MCF 10A (cell line): ENCODE measurements at regions of chr3 and their contacts with region 1.

Region 1: DNA sequence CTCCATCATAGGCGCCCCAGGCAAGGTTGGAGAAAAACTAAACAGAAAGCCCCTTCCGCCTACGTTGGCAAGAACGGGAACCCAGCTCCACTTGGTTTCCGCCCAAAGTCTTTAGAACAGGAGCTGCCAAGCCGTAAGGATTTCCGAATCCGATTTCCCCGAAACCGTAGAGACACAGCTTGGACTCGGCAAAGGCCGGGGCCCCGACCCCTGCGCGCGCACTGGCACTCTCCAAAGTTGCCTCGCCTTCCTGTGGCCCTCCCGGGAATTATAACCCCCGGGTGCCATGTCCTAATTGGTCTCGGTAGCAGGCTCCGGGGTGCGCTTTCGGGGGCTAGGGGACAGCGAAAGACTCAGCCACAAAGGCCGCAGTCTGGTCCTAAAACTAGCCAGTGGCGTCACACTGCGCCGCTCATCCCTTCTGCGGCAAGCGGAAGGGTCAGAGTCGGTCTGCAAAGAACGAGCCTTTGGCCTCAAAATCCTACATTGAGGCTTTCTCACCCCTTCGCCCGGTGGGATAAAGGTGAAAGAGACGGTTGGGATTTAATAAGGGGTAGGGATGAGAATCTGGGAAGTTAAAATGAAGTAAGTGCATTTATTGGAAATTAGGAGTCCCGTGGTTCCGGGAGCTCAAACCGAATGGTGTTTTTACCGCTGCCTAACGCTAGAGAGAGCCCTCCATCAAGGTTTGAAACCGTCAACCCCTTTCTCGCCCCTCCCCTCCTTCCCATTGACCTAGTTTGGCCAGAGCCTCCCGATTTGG is 6.8 kb downstream of the BCL6 start:
- DNase-seq: peak; percentile 95
- H3K4me3 Mint-ChIP-seq: peak overlapping the region; percentile 98
- H3K27ac Mint-ChIP-seq: peak overlapping the region; percentile 100
- H3K4me1 Mint-ChIP-seq: peaks cover 44% of the 10 kb centered on the region
- H3K27me3 Mint-ChIP-seq: no peaks in the 10 kb centered on the region
- CTCF ChIP-seq: peak; percentile 63

Region 2: GRCh38 chr3:187689984-187690383 is 48.5 kb before region 1 on chr3:
- CTCF ChIA-PET with region 1: no interaction called
- POLR2A ChIA-PET with region 1: no interaction called
- intact Hi-C with region 1: no loop called
- DNase-seq: no peak
- H3K4me3 Mint-ChIP-seq: no peak overlapping the region
- H3K27ac Mint-ChIP-seq: no peak overlapping the region
- H3K4me1 Mint-ChIP-seq: no peaks in the 10 kb centered on the region
- H3K27me3 Mint-ChIP-seq: peaks cover 47% of the 10 kb centered on the region
- CTCF ChIP-seq: no peak

Region 3: GRCh38 chr3:188262913-188263683 is 524.6 kb after region 1 on chr3:
- CTCF ChIA-PET with region 1: interaction called, 9 read pairs
- POLR2A ChIA-PET with region 1: interaction called, 29 read pairs
- intact Hi-C with region 1: no loop called
- DNase-seq: peak; percentile 62
- H3K4me3 Mint-ChIP-seq: no peak overlapping the region
- H3K27ac Mint-ChIP-seq: peak overlapping the region; percentile 43
- H3K4me1 Mint-ChIP-seq: peaks cover 8% of the 10 kb centered on the region
- H3K27me3 Mint-ChIP-seq: no peaks in the 10 kb centered on the region
- CTCF ChIP-seq: no peak

Region 4: DNA sequence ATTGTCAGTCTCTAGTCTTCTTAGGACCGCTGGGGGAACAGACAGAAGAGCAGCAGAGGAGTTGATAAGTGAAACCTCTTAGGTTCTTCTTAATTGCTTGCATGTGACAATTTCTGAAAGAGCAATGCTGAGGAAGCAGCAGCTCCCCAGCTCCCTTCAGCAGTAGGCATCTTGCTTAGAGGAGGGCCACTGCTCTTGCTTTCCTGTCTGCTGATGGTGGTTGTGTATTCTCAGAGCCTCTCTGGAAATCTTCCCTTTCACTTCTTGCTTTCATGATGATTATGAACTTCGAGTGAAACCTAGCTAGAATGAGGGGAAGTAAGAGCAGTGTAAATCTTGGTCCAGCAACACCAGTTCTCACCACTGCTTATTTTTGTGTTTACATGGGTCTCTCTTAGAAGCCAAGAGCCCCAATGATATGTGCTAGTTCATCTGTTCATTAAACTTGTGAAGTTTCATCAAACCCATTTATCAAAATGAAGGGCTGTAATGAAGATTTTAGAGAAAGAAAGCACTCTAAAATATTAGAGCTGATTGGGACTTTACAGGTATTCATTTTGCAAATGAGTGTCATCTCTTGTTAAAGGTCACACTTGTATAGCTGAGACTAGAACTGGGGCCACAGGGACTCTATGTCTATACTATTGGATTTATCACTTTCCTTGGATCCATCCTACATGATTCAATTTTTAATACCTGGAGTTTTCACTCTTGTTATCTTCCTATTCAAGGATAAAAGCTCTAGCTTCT is 662.2 kb after region 1 on chr3:
- CTCF ChIA-PET with region 1: interaction called, 5 read pairs
- POLR2A ChIA-PET with region 1: interaction called, 5 read pairs
- intact Hi-C with region 1: loop called (anchors 5 kb)
- DNase-seq: no peak
- H3K4me3 Mint-ChIP-seq: no peak overlapping the region
- H3K27ac Mint-ChIP-seq: no peak overlapping the region
- H3K4me1 Mint-ChIP-seq: no peaks in the 10 kb centered on the region
- H3K27me3 Mint-ChIP-seq: no peaks in the 10 kb centered on the region
- CTCF ChIP-seq: no peak

Region 5: DNA sequence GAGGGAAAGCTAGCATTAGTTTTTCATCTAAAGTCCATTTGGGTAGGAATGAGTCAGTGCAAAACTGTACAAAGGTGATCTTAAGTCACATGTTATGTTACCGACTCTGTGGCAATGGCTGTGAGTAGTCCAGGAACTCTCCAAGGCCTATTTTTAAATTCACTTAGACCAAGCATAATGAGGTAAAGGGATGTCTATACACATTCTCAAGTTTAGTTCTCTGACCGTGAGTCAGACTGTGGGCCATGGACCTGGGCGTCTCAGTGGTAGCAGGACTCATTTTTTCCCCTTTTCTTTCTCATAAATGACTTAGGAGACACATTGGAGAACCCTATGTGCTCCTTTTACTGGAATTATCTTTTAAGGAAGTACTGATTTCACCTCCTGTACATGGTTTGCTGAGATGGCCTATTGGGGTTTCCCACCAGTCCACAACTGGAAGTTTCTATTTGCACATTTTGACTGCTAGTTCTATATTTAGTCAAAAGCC is 944.6 kb after region 1 on chr3:
- CTCF ChIA-PET with region 1: interaction called, 6 read pairs
- POLR2A ChIA-PET with region 1: no interaction called
- intact Hi-C with region 1: loop called (anchors 5 kb)
- DNase-seq: peak; percentile 89
- H3K4me3 Mint-ChIP-seq: no peak overlapping the region
- H3K27ac Mint-ChIP-seq: peak overlapping the region; percentile 72
- H3K4me1 Mint-ChIP-seq: peaks cover 27% of the 10 kb centered on the region
- H3K27me3 Mint-ChIP-seq: no peaks in the 10 kb centered on the region
- CTCF ChIP-seq: no peak

Region 6: GRCh38 chr3:188947401-188948280 is 1209.1 kb after region 1 on chr3:
- CTCF ChIA-PET with region 1: interaction called, 240 read pairs
- POLR2A ChIA-PET with region 1: interaction called, 252 read pairs
- intact Hi-C with region 1: no loop called
- DNase-seq: peak; percentile 99
- H3K4me3 Mint-ChIP-seq: peak overlapping the region; percentile 71
- H3K27ac Mint-ChIP-seq: peak overlapping the region; percentile 96
- H3K4me1 Mint-ChIP-seq: peaks cover 58% of the 10 kb centered on the region
- H3K27me3 Mint-ChIP-seq: no peaks in the 10 kb centered on the region
- CTCF ChIP-seq: peak; percentile 46

Region 7: DNA sequence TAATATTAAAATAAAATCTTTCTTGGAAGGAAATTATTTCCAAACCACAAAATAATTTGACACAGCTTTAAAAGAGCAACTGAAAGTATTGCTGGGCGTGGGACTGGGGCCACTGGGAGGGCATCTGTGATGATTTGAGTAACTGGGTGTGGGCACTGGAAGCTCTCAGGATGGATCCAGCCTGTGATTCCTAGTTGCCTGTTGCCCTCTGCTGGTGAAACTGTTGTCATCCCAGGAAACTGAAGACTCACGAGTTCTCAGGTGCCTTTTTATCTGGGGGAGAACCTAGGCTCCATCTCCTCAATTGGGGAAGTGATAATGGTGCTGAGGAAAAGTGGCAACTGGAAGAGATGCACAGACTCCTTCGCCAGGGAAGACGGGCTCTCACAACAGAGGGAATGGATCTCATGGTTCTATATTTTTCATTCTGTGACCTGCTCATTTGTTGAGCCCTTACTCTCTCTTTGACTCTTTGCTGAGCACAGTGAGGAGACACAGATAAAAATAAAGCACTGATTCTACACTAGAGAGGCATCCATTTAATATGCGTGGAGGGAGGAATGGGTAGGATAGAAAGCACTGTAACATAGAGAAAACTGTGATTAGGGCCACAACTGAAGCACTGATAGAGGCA is 1494.8 kb after region 1 on chr3:
- CTCF ChIA-PET with region 1: interaction called, 10 read pairs
- POLR2A ChIA-PET with region 1: interaction called, 3 read pairs
- intact Hi-C with region 1: loop called (anchors 1 kb)
- DNase-seq: peak; percentile 78
- H3K4me3 Mint-ChIP-seq: no peak overlapping the region
- H3K27ac Mint-ChIP-seq: no peak overlapping the region
- H3K4me1 Mint-ChIP-seq: no peaks in the 10 kb centered on the region
- H3K27me3 Mint-ChIP-seq: no peaks in the 10 kb centered on the region
- CTCF ChIP-seq: peak; percentile 67